GM10248 (cell line): ENCODE measurements at regions of chr2 and their contacts with region 1.

Region 1: GRCh38 chr2:210544831-210545230 is 11.6 kb upstream of the CPS1 start:
- DNase-seq: no peak
- CTCF ChIP-seq: no peak

Region 2: DNA sequence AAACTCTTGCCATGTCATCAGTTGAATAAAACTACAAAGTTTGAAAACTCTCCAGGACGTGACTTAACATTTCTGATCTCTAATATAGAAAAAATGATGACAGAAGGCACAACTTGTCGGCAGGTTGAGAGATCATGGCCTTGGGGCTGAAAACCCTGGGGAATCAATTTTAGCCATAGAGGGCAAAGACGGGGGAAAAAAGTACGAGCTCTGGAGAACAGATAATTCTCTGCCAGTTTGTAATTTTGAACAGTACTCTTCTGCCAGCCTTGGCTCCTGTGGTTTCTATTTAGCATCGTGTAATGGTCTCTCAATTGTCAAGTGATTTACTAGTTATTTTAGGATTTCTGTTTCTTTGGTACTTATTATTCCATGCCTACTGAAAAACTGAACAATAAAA is 13.8 kb before region 1 on chr2:
- CTCF ChIA-PET with region 1: interaction called, 11 read pairs
- POLR2A ChIA-PET with region 1: no interaction called
- DNase-seq: no peak
- CTCF ChIP-seq: no peak